IMR-90 (cell line): ENCODE measurements at regions of chr1 and their contacts with region 1.

Region 1: GRCh38 chr1:112715264-112716053 is at the start of gene PPM1J:
- DNase-seq: peak; percentile 83
- ATAC-seq: peak; percentile 79
- H3K4me3 ChIP-seq: peak within 1 kb of the TSS; percentile 68
- H3K27ac ChIP-seq: no peak within 1 kb of the TSS
- H3K4me1 ChIP-seq: no peaks in the 10 kb centered on the region
- H3K27me3 ChIP-seq: peaks cover 7% of the 10 kb centered on the region; the same call in 1 of the 2 replicates
- CTCF ChIP-seq: no peak
- POLR2A ChIP-seq: no peak
- RAD21 ChIP-seq: no peak
- total RNA-seq, gene PPM1J: 1.4 and 1.8 TPM in 2 replicates

Region 2: DNA sequence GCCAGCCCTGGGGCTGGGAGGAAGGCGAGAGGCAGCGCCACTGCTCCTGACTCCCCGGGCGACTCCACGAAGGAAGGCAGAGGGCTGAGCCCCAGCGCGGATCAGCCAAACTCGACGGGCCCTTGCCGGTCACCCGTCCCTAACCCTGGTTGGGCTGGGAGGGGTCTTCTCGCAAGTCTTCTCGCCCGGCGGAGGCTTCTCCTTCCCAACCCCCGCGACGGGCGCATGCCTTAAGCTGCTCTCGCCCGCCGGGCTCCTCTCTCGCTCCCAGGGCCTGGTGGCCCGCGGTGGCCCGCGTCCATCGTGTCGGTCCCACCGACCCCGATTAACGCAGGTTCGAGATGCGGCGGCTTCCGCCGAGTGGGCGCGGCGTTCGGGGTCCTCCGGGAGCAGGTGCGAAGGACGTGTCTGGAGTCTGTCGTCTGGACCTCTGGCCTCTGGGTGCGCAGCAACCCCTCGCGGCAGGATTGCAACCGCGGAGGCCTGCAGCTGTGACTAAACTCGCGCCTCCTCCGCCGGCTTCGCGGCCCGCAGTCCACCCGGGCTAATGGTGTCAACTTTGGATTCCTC is 28.6 kb after region 1 on chr1:
- CTCF ChIA-PET with region 1: interaction called, 10 read pairs
- POLR2A ChIA-PET with region 1: no interaction called
- dilution Hi-C with region 1: no loop called
- in situ Hi-C with region 1: no loop called
- intact Hi-C with region 1: loop called (anchors 1 kb)
- DNase-seq: peak; percentile 50
- ATAC-seq: peak; percentile 97
- H3K4me3 ChIP-seq: peak overlapping the region; percentile 28
- H3K27ac ChIP-seq: no peak overlapping the region
- H3K4me1 ChIP-seq: no peaks in the 10 kb centered on the region
- H3K27me3 ChIP-seq: peaks cover 15% of the 10 kb centered on the region
- CTCF ChIP-seq: peak; percentile 59
- POLR2A ChIP-seq: no peak
- RAD21 ChIP-seq: peak; percentile 51

Region 3: DNA sequence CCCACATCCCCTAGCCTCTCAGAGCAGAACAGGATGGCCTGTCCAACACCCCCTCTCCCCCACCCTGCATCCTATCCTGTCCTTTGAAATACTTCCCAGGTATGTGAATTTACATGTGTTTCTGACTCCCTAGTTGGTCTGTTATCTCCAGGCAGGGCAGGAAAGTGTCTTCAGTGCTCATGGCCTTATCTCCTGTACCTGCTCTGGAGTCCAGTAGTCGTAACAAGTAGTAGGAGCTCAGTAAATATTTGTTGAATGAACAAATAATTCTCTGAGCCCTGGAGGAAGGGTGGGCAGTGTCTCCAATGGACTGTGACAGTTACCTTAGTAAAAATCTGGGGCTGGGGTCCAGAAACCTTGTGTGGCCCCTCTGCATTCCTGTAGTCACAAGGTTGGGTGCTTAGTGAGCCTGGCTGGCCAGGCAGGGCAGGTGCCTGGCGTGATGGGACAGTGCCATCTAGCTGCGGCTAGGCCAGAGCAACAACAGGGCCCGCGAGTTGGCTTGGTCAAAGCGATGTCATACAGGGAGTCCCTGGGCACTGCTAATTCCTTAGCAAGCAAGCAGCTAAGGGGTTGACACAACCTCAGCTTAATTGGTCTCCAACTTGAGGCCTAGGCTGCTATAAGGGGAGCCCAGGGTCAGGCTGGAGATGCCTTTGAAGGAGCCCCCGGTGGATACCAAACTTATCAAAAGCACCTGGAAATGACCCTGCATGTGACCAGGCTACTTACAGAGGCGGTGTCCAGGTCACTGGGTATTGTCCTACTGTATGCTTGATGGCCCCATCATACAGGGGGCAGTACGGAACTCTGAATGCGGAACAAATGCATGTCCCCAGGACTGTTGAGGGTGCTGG is 88.7 kb after region 1 on chr1:
- CTCF ChIA-PET with region 1: interaction called, 32 read pairs
- POLR2A ChIA-PET with region 1: no interaction called
- dilution Hi-C with region 1: no loop called
- in situ Hi-C with region 1: loop called (anchors 5 kb)
- intact Hi-C with region 1: loop called (anchors 1 kb)
- DNase-seq: peak; percentile 65
- ATAC-seq: peak; percentile 96
- H3K4me3 ChIP-seq: no peak overlapping the region
- H3K27ac ChIP-seq: no peak overlapping the region
- H3K4me1 ChIP-seq: no peaks in the 10 kb centered on the region
- H3K27me3 ChIP-seq: peaks cover 12% of the 10 kb centered on the region
- CTCF ChIP-seq: peak; percentile 96
- POLR2A ChIP-seq: peak; percentile 53; the same call in 1 of the 2 replicates
- RAD21 ChIP-seq: peak; percentile 99

Region 4: GRCh38 chr1:112882271-112882744 is 166.8 kb after region 1 on chr1:
- CTCF ChIA-PET with region 1: no interaction called
- POLR2A ChIA-PET with region 1: no interaction called
- dilution Hi-C with region 1: no loop called
- in situ Hi-C with region 1: no loop called
- intact Hi-C with region 1: loop called (anchors 1 kb)
- DNase-seq: no peak
- ATAC-seq: no peak
- H3K4me3 ChIP-seq: no peak overlapping the region
- H3K27ac ChIP-seq: no peak overlapping the region
- H3K4me1 ChIP-seq: peaks cover 5% of the 10 kb centered on the region
- H3K27me3 ChIP-seq: peaks cover 5% of the 10 kb centered on the region
- CTCF ChIP-seq: no peak
- POLR2A ChIP-seq: no peak
- RAD21 ChIP-seq: no peak

Region 5: DNA sequence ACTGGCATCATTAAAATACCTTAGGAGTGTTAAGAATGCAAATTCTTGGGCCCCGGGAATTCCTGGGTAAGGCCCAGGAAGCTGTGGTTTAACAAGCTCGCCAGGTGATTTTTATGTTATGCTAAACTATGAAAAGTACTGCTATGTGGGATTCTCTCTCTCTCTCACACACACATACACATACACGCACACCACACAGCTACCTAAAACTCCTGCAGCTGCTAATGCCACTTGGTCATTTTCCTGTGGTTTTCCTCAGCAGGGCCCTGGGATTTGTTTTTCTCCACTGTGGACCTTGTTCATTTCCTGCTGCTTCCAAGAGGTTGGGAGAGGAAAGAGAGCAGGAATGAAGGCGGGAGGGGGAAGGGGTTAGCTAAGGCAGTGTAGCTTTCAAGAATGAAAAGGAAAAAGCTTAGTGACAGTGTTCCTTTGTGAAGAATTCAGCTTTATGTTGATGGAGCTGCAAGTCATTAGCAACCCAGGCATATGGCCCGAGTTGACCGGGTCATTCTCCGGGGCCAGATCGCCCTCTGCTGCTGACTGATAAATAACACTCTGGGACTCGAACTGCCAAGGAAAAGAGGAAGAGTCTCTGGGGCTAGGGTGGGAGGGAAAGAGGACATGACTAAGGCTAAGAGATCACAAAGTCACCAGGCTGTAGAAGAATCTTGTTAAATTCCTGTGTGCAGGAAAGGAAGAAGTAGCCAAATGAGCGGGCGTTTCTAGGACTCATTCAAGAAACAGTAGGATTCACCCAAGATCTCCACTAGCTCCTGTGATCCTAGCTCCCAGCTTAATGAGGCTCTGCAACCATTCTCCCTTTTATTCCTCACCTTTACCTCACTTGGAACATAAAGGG is 327.1 kb after region 1 on chr1:
- CTCF ChIA-PET with region 1: interaction called, 5 read pairs
- POLR2A ChIA-PET with region 1: no interaction called
- dilution Hi-C with region 1: no loop called
- in situ Hi-C with region 1: loop called (anchors 10 kb)
- intact Hi-C with region 1: loop called (anchors 2 kb)
- DNase-seq: peak; percentile 78
- ATAC-seq: peak; percentile 94
- H3K4me3 ChIP-seq: no peak overlapping the region
- H3K27ac ChIP-seq: no peak overlapping the region
- H3K4me1 ChIP-seq: peaks cover 10% of the 10 kb centered on the region
- H3K27me3 ChIP-seq: no peaks in the 10 kb centered on the region
- CTCF ChIP-seq: peak; percentile 66
- POLR2A ChIP-seq: no peak
- RAD21 ChIP-seq: peak; percentile 81

Region 6: GRCh38 chr1:113677250-113678158 is 962.0 kb after region 1 on chr1:
- CTCF ChIA-PET with region 1: interaction called, 3 read pairs
- POLR2A ChIA-PET with region 1: no interaction called
- dilution Hi-C with region 1: no loop called
- in situ Hi-C with region 1: loop called (anchors 25 kb)
- intact Hi-C with region 1: loop called (anchors 5 kb)
- DNase-seq: peak; percentile 63
- ATAC-seq: peak; percentile 50
- H3K4me3 ChIP-seq: no peak overlapping the region
- H3K27ac ChIP-seq: no peak overlapping the region
- H3K4me1 ChIP-seq: peaks cover 2% of the 10 kb centered on the region; the same call in 1 of the 2 replicates
- H3K27me3 ChIP-seq: no peaks in the 10 kb centered on the region
- CTCF ChIP-seq: peak; percentile 68
- POLR2A ChIP-seq: no peak
- RAD21 ChIP-seq: peak; percentile 68